ENCODE measurements at regions of chr13 and their contacts with region 1.

Region 1: DNA sequence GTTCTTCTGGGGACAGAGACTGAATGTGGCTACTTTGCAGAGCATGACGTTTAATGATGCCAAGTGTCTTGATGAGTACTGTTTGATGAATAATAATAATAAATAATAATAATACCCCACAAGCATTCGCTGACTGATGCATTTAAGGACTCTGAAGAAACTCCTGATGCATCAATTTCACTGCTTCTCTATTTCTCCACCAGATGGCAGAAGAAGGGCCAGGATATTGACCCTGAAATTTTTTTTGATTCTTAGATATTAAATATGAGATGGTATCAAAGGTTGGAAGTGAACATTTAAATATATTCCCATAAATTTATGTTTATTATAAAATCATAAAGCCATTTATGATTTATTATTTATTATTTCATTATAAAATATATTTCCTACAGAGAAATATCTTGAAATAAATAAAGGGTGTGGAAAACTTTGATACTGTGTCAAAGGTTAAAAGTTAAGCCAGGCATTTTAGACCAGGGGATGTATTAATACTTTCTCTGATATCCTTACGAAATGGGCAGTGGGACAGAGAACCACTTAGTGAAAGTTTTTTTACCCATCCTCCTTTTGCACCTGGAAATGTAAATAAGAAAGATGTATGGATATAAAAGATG is 170.9 kb downstream of the LACC1 start:
- DNase-seq: peak in 1 of 3 donors; percentile 43
- ATAC-seq: peak; percentile 40
- H3K4me3 ChIP-seq: no peak overlapping the region
- H3K4me1 ChIP-seq: peaks cover 9% of the 10 kb centered on the region
- CTCF ChIP-seq: peak; percentile 45

Region 2: DNA sequence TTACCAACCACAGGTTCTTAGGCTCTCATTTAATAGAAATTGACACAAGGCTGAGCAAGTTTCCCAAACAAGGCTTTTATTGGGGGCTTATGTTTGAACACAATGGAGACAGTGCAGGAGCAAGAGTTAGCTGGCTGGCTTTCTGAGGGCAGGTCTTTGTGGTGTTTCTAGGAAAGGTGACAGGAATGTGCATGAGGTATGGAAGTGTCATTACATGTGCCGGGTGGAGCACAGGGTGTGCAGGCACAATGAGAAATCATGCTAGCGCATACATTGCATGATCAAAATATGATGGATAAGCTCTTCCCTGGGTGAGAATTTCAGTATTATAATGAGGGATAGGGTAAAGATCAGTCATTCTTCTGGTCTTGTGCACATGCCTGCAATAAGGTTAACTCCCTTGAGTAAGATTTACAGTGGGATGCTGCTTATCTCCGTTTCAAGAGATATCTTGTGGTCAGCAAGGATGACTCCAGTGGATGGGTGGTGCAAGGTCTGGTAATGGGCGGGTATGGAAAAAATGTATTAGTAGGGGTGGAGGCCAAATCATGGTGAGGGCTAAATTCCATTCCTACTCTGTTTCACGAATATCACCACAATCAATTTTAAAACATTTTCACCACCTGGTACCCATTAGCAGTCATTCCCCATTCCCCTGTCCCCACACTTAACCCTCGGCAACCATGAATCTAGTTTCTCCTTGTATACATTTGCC is 211.8 kb before region 1 on chr13:
- intact Hi-C with region 1: no loop called
- DNase-seq: no peak
- ATAC-seq: no peak
- H3K4me3 ChIP-seq: no peak overlapping the region
- H3K4me1 ChIP-seq: no peaks in the 10 kb centered on the region
- CTCF ChIP-seq: no peak

Region 3: GRCh38 chr13:43915451-43915850 is 135.1 kb before region 1 on chr13:
- intact Hi-C with region 1: loop called in 1 of 2 experiments (anchors 10 kb)
- DNase-seq: no peak
- ATAC-seq: no peak
- H3K4me3 ChIP-seq: no peak overlapping the region
- H3K4me1 ChIP-seq: no peaks in the 10 kb centered on the region
- CTCF ChIP-seq: no peak

Region 4: DNA sequence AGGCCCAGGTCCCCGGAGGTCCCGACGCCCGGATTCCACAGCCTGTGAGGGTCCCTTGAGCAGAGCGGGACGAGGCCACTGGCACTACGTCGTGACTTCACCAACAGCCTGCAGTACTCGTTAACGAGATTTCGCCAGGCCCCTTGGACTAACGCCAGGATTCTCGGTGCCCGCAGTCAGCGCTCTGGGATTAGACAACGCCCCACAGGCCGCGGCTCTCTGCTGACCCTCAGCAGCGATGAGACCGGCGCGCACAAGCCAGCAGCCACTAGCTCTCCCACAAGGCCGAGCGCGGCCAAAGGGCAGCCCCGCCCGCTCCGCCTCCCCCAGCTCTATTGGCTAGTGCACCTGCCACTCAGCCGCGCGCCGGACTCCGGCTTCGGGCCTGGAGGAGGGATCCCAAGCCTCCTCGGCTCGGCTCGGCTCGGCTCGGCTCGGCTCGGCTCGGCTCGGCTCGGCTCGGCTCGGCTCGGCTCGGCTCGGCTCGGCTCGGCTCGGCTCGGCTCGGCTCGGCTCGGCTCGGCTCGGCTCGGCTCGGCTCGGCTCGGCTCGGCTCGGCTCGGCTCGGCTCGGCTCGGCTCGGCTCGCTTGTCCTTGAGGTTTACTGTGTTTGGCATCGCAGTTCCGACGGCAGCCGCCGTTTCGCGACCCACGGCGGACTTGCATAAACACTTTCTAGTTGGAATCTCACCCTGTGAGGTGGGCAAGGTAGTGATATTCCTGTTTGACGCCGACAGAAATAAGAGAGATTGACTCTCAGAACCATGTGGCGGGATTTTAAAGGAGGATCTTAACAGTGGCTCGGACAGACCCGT is 91.4 kb after region 1 on chr13:
- intact Hi-C with region 1: loop called in 1 of 2 experiments (anchors 10 kb)
- DNase-seq: peak; percentile 98 to 100 (median 99)
- ATAC-seq: peak; percentile 97
- H3K4me3 ChIP-seq: peak overlapping the region; percentile 29
- H3K4me1 ChIP-seq: peaks cover 20% of the 10 kb centered on the region
- CTCF ChIP-seq: no peak

Region 5: DNA sequence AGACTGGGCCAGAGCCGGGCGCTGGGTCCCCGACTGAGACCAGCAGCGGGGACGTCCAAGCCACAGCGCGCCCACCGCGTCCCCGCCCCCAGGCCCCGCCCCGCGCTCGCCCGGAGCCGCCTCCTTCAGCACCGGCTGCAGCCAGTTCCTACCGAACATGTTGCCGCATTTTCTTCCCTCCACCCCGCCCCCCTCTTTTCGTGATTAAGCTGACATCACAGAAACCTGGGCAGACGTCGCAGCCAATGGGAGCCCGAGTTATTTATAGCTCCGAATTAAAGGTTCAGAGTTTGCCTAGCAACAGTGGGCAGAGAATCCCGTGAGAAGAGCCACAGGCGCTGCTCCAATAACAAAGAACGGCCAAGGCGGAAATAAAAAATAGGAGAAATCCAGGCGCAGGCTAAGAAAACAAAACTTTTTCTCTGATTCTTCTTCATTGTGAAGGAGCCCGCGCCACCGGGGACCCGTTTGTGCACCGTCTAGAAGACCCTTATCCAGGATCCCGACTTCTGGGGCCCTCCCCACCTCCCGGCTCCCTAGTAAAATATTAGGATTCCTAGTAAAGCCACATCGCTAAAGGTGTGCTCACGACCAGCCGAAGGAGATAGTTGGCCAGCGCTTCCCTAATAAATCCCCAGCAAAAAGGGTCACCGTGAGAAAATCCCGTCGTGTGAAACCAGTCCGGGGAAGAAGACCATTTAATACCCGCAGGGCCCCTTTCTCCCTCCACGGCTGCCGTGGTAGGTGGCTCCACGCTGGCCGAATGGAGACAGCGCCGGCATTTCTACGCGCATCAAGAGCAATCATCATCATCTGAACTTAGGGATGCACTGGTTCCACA is 384.8 kb after region 1 on chr13:
- intact Hi-C with region 1: loop called (anchors 5 to 10 kb)
- DNase-seq: peak; percentile 95 to 99 (median 95)
- ATAC-seq: peak; percentile 84
- H3K4me3 ChIP-seq: peak overlapping the region; percentile 40
- H3K4me1 ChIP-seq: peaks cover 20% of the 10 kb centered on the region
- CTCF ChIP-seq: no peak